Naive thymus-derived CD4-positive, alpha-beta T cell (primary cell): ENCODE measurements at regions of chr3 and their contacts with region 1.

Region 1: GRCh38 chr3:187000711-187001151 is 70.4 kb downstream of the ST6GAL1 start:
- DNase-seq: peak in 1 of 9 donors; percentile 38
- ATAC-seq: peak; percentile 53
- H3K4me3 ChIP-seq: no peak overlapping the region
- H3K4me3 Mint-ChIP-seq: peak overlapping the region in 2 of 10 donors; percentile 6 to 59
- H3K27ac ChIP-seq: no peak overlapping the region
- H3K27ac Mint-ChIP-seq: peak overlapping the region in 8 of 9 donors; percentile 14 to 89 (median 50)
- H3K4me1 ChIP-seq: peaks cover 6 to 17% of the 10 kb centered on the region in 2 donors
- H3K4me1 Mint-ChIP-seq: peaks cover 42 to 77% (median 58%) of the 10 kb centered on the region in 7 donors
- H3K27me3 ChIP-seq: no peaks in the 10 kb centered on the region
- H3K27me3 Mint-ChIP-seq: no peaks in the 10 kb centered on the region

Region 2: DNA sequence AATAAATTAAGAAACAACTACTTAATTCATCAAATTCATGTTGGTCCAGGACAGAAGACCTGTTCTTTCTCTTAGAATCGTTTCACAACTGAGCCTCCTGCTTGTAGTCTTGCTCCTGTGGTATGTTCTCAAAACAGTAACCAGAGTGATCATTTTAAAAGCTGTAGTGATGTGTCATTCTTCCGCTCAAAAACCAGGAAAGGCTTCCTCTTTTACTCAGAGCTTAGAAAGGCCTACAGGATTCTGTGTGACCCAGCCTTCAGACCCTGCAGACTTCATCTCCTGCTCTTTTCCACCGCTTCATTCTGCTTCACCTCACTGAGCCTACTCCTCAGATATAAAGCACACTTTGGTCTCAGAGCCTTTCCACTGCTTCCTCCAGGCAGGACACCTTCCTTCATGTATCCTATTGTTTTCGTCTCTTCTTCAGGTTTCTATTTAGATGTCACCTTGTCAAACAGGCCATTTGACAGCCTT is 47.7 kb before region 1 on chr3:
- CTCF ChIA-PET with region 1: no interaction called
- POLR2A ChIA-PET with region 1: no interaction called
- intact Hi-C with region 1: loop called in 1 of 2 experiments (anchors 5 kb)
- DNase-seq: no peak
- ATAC-seq: peak; percentile 70
- H3K4me3 ChIP-seq: no peak overlapping the region
- H3K4me3 Mint-ChIP-seq: peak overlapping the region; percentile 0 to 76 (median 45)
- H3K27ac ChIP-seq: peak overlapping the region; percentile 6
- H3K27ac Mint-ChIP-seq: peak overlapping the region; percentile 18 to 91 (median 63)
- H3K4me1 ChIP-seq: peaks cover 13 to 52% of the 10 kb centered on the region in 2 donors
- H3K4me1 Mint-ChIP-seq: peaks cover 71 to 95% (median 83%) of the 10 kb centered on the region in 7 donors
- H3K27me3 ChIP-seq: no peaks in the 10 kb centered on the region
- H3K27me3 Mint-ChIP-seq: no peaks in the 10 kb centered on the region

Region 3: DNA sequence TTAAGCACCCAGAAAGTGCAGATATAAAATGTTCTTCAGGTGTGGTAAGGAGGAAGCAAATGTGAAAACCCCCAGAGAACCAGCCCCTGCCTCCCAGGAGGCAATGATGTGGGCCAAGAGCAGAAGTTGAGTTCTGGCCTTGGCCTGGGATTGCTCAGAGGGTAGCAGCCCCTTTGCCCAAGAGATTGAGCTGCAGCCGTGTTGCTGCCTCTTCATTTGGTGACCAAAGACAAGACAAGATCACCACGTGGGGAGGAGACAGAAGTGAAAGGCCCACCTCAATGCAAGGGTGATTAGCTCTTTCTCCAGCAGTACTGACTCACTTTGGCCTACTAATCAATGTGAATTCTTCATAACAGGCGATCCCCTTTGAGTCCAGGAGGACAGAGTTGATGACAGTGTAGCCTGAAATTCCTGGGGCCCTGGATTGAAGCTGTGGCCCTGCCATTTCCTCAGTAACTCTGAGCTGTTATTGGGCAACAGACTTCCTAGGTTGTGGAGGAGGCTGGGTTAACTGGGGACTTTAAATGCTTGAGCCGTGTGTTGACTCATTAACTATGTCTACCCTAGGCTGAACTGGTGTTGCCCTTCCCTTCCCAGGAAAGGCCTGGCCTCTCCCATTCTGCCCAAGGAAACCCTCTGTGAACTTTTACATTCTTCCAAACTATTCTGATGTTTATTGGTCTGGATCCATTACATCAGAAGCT is 16.1 kb after region 1 on chr3:
- CTCF ChIA-PET with region 1: interaction called, 4 read pairs
- POLR2A ChIA-PET with region 1: interaction called, 3 read pairs
- intact Hi-C with region 1: loop called in 1 of 2 experiments (anchors 1 kb)
- DNase-seq: no peak
- ATAC-seq: no peak
- H3K4me3 ChIP-seq: no peak overlapping the region
- H3K4me3 Mint-ChIP-seq: peak overlapping the region in 2 of 10 donors; percentile 14 to 74
- H3K27ac ChIP-seq: no peak overlapping the region
- H3K27ac Mint-ChIP-seq: peak overlapping the region in 8 of 9 donors; percentile 17 to 96 (median 72)
- H3K4me1 ChIP-seq: peaks cover 16 to 57% of the 10 kb centered on the region in 2 donors
- H3K4me1 Mint-ChIP-seq: peaks cover 53 to 90% (median 76%) of the 10 kb centered on the region in 7 donors
- H3K27me3 ChIP-seq: no peaks in the 10 kb centered on the region
- H3K27me3 Mint-ChIP-seq: no peaks in the 10 kb centered on the region

Region 4: DNA sequence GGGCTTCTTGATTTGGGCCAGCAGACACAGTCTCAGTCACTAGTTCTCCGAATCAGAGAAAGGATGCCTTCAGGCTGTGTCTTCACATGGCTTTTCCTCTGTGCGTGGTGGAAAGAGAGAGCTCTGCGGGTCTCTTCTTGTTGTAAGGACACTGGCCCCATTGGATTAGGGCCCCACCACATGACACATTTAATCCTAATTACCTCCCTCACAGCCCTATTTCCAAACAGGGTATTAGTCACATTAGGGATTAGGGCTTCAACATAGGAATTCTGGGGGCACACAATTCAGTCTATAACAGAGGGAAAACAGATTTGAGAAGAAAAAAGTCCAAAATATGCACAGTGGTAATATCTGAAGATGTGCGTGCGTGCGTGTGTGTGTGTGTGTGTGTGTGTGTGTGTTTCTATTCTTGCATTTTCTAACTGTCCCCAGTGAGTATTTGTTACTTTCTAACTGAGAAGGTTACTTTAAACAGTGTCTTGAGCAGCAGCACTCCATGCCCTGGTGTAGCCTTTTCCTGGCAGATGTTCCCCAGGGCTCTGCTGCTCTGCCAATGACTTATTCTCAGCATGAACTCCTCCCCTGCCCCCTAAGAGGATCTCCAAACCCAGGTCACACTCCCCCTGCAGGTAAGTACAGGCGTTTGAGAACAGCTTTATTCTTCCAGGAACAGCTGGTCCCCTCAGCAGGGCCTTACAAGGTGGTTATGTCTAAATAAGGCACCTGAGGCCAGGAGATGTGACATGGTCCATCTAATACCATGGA is 65.7 kb after region 1 on chr3:
- CTCF ChIA-PET with region 1: no interaction called
- POLR2A ChIA-PET with region 1: interaction called, 3 read pairs
- intact Hi-C with region 1: loop called in 1 of 2 experiments (anchors 10 kb)
- DNase-seq: peak in 7 of 9 donors; percentile 54 to 75 (median 67)
- ATAC-seq: peak; percentile 83
- H3K4me3 ChIP-seq: no peak overlapping the region
- H3K4me3 Mint-ChIP-seq: peak overlapping the region in 7 of 10 donors; percentile 18 to 42 (median 31)
- H3K27ac ChIP-seq: peak overlapping the region; percentile 14
- H3K27ac Mint-ChIP-seq: peak overlapping the region; percentile 61 to 92 (median 84)
- H3K4me1 ChIP-seq: peaks cover 13 to 38% of the 10 kb centered on the region in 2 donors
- H3K4me1 Mint-ChIP-seq: peaks cover 49 to 87% (median 79%) of the 10 kb centered on the region in 7 donors
- H3K27me3 ChIP-seq: no peaks in the 10 kb centered on the region
- H3K27me3 Mint-ChIP-seq: no peaks in the 10 kb centered on the region

Region 5: DNA sequence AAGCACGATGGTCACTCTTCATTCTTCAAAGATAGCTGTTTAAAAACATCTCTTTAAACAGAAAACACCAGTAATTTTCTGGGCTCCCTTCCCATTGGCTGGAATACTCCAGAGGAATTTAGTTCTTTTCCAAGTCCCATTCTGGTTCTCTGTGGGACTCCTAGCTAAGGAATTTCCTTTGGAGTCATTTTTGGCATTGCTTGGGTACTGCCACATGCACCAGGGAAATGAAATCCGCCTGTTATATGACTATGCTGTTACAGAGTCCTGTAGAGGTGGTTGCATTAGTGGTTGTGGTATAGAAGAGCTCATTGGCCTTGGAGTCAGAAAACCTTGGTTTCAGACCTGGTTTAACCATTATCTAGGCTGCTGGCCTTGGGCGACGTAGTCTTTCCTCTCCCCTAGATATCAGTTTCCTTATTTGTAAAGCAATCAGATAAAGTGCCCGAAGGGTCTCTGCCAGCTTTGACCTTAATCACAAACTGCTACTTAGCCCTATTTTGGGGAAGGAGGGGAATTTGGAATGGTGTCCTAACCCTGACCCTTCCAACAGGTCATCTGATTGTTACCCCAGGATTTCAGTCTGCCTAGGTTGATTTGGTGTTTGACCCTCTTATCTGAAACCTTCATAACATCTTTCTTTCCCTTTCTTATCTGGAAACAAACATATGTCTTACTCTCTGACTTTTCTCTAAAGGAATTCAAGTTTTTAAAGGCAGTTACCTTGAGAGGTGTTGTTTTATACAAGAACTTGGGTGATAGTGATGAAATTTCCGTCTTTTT is 210.0 kb after region 1 on chr3:
- CTCF ChIA-PET with region 1: no interaction called
- POLR2A ChIA-PET with region 1: no interaction called
- intact Hi-C with region 1: no loop called
- DNase-seq: no peak
- ATAC-seq: no peak
- H3K4me3 ChIP-seq: no peak overlapping the region
- H3K4me3 Mint-ChIP-seq: no peak overlapping the region
- H3K27ac ChIP-seq: no peak overlapping the region
- H3K27ac Mint-ChIP-seq: no peak overlapping the region
- H3K4me1 ChIP-seq: no peaks in the 10 kb centered on the region
- H3K4me1 Mint-ChIP-seq: no peaks in the 10 kb centered on the region
- H3K27me3 ChIP-seq: no peaks in the 10 kb centered on the region
- H3K27me3 Mint-ChIP-seq: peaks cover 0 to 24% (median 3%) of the 10 kb centered on the region in 5 donors